PC-9 (cell line): ENCODE measurements at regions of chrX and their contacts with region 1.

Region 1: DNA sequence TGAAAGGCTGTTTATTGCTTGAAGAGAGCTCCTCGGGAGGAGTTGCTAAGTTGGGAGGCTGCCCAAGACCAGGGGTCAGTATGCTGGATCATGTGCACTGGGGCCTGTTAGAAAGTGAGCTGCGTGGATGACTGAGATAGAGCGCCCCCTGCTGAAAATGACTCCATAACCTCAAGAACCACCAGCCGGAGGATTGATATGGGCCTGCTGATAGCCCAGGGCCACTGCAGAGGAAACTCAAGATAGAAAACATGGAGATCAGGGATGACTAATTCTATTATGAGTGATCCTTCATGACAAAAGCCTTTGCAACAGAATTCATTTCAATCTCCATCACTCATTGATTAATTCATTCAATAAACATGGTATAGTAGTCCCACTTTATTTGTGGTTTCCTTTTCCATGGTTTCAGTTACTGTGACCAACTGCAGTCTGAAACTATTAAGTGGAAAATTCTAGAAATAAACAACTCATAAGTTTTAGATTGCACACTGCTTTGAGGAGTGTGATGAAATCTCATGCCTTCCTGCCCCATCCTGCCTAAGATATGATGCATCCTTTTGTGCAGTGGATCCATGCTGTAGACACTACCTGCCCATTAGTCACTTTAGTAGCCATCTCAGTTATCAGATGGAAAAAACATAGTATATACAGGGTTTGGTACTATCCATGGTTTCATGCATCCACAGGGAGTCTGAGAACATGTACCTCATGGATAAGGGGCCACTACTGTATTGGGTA is 126.7 kb upstream of the MBNL3 start:
- DNase-seq: peak in 1 of 2 experiments; percentile 24
- H3K4me3 ChIP-seq: no peak overlapping the region
- H3K27ac ChIP-seq: no peak overlapping the region
- H3K4me1 ChIP-seq: no peaks in the 10 kb centered on the region
- H3K27me3 ChIP-seq: no peaks in the 10 kb centered on the region
- CTCF ChIP-seq: peak; percentile 64

Region 2: DNA sequence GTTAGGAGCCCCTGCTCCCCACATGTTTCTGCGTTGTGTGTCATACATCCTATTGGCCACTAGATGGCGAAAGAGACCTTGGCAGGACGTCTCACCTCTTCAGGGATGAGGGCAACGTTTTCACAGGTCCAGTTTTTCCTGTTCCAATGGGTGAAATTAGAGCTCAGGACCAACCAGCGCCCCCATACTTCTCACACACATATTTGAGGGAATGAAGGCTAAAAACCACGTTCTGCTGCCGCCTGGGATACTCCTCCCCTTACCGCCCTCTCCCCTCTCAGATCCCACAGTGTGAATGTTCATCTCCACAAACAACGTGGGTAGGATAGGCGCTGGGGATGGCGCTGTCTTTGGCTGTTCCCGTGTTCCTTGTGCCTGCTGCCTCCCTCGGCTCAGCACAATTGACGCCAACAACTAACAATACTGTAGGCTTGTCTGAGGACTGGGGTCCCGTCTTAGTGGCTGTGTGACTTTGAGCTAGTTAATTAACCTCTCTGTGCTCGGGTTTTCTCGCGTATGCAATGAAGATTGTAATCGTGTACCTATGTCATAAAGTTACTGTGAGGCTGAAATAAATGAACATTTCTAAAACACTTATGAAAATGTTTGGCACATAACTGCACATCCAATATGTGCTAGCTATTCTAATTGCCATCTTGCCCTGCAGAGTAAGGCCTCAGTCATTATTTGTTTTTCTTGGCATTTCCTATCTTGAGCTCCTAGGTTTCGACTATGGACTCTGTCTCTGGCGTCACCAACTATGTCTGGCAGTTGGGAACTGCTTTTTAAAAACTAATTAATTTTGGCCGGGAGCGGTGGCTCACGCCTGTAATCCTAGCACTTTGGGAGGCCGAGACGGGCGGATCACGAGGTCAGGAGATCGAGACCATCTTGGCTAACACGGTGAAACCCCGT is 773.8 kb before region 1 on chrX:
- CTCF ChIA-PET with region 1: interaction called, 4 read pairs
- POLR2A ChIA-PET with region 1: no interaction called
- intact Hi-C with region 1: loop called (anchors 2 kb)
- DNase-seq: peak; percentile 45 to 78
- H3K4me3 ChIP-seq: peak overlapping the region; percentile 25; the same call in 1 of the 2 replicates
- H3K27ac ChIP-seq: no peak overlapping the region
- H3K4me1 ChIP-seq: peaks cover 11% of the 10 kb centered on the region
- H3K27me3 ChIP-seq: no peaks in the 10 kb centered on the region
- CTCF ChIP-seq: peak; percentile 96

Region 3: GRCh38 chrX:132092439-132093065 is 523.0 kb before region 1 on chrX:
- CTCF ChIA-PET with region 1: interaction called, 4 read pairs
- POLR2A ChIA-PET with region 1: no interaction called
- intact Hi-C with region 1: loop called (anchors 5 kb)
- DNase-seq: peak; percentile 58 to 61
- H3K4me3 ChIP-seq: no peak overlapping the region
- H3K27ac ChIP-seq: no peak overlapping the region
- H3K4me1 ChIP-seq: no peaks in the 10 kb centered on the region
- H3K27me3 ChIP-seq: no peaks in the 10 kb centered on the region
- CTCF ChIP-seq: peak; percentile 91

Region 4: DNA sequence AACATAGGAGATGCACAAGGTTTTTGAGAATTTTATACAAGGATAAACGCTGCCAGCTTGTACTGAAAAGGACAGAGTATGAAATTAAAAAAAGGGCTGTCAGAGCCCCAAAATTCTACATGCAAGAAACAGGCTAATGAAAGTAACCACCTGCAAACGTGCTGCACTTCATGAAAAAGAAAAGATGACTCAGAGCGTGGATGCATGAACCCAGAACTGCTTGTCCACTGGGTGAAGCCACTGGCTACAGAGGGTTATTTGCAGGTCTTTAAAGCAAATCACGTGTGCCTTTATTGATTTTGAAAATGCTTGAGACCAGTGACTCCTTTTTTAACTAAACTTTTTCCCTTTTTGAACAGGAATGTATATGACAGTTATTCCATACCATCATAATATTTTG is 462.4 kb before region 1 on chrX:
- CTCF ChIA-PET with region 1: no interaction called
- POLR2A ChIA-PET with region 1: no interaction called
- intact Hi-C with region 1: no loop called
- DNase-seq: no peak
- H3K4me3 ChIP-seq: no peak overlapping the region
- H3K27ac ChIP-seq: no peak overlapping the region
- H3K4me1 ChIP-seq: no peaks in the 10 kb centered on the region
- H3K27me3 ChIP-seq: no peaks in the 10 kb centered on the region
- CTCF ChIP-seq: no peak

Region 5: DNA sequence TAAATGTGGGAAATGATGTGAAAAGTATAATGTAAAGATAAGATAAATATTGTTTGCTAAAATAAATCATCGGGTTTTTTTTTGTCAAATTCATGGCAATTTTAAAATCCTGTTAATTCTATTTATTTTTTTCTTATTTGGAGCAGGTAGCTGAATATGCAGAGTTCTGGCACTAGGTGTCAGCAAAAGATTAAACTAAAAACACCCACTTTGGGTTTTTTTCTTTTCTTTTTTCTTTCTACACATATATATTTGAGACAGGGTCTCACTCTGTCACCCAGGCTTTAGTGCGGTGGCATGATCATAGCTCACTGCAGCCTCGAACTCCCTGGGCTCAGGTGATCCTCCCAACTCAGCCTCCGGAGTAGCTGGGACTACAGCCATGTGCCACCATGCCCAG is 389.4 kb before region 1 on chrX:
- CTCF ChIA-PET with region 1: interaction called, 15 read pairs
- POLR2A ChIA-PET with region 1: no interaction called
- intact Hi-C with region 1: loop called (anchors 1 kb)
- DNase-seq: no peak
- H3K4me3 ChIP-seq: no peak overlapping the region
- H3K27ac ChIP-seq: no peak overlapping the region
- H3K4me1 ChIP-seq: peaks cover 22% of the 10 kb centered on the region
- H3K27me3 ChIP-seq: no peaks in the 10 kb centered on the region
- CTCF ChIP-seq: peak; percentile 80

Region 6: GRCh38 chrX:132292793-132293192 is 322.8 kb before region 1 on chrX:
- CTCF ChIA-PET with region 1: interaction called, 6 read pairs
- POLR2A ChIA-PET with region 1: no interaction called
- intact Hi-C with region 1: loop called (anchors 1 kb)
- DNase-seq: peak; percentile 21 to 45
- H3K4me3 ChIP-seq: no peak overlapping the region
- H3K27ac ChIP-seq: no peak overlapping the region
- H3K4me1 ChIP-seq: no peaks in the 10 kb centered on the region
- H3K27me3 ChIP-seq: no peaks in the 10 kb centered on the region
- CTCF ChIP-seq: peak; percentile 83

Region 7: GRCh38 chrX:132488819-132489577 is 126.6 kb before region 1 on chrX and contains the start of gene MBNL3:
- CTCF ChIA-PET with region 1: no interaction called
- POLR2A ChIA-PET with region 1: no interaction called
- intact Hi-C with region 1: loop called (anchors 5 kb)
- DNase-seq: peak; percentile 72 to 86
- H3K4me3 ChIP-seq: peak within 1 kb of the TSS; percentile 93
- H3K27ac ChIP-seq: peak within 1 kb of the TSS; percentile 75
- H3K4me1 ChIP-seq: peaks cover 27% of the 10 kb centered on the region
- H3K27me3 ChIP-seq: no peaks in the 10 kb centered on the region
- CTCF ChIP-seq: no peak
- total RNA-seq, gene MBNL3: 24.4 and 36.1 TPM in 2 replicates

Region 8: DNA sequence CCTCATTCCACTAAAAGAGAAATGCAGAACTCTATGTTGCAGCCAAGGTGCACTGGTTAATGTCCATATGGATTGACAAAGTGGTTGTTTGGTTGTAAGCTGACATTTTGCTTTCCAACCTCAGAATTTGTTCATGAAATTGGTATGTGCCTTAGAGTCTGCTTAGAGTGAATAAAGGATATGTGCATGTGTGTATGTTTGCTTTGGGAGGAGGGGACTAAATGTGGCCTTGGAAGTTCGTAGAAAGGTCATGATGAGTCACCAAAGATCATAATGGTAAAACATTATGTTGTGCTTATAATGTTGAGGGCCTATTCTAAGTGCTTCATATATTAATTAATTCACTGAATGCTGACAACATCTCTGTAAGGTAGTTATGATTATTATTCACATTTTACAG is 82.6 kb before region 1 on chrX:
- CTCF ChIA-PET with region 1: no interaction called
- POLR2A ChIA-PET with region 1: no interaction called
- intact Hi-C with region 1: no loop called
- DNase-seq: peak in 1 of 2 experiments; percentile 40
- H3K4me3 ChIP-seq: no peak overlapping the region
- H3K27ac ChIP-seq: no peak overlapping the region
- H3K4me1 ChIP-seq: peaks cover 12% of the 10 kb centered on the region
- H3K27me3 ChIP-seq: no peaks in the 10 kb centered on the region
- CTCF ChIP-seq: no peak

Region 9: GRCh38 chrX:132651421-132652086 is 36.0 kb after region 1 on chrX:
- CTCF ChIA-PET with region 1: no interaction called
- POLR2A ChIA-PET with region 1: no interaction called
- intact Hi-C with region 1: no loop called
- DNase-seq: peak in 1 of 2 experiments; percentile 21
- H3K4me3 ChIP-seq: no peak overlapping the region
- H3K27ac ChIP-seq: no peak overlapping the region
- H3K4me1 ChIP-seq: no peaks in the 10 kb centered on the region
- H3K27me3 ChIP-seq: no peaks in the 10 kb centered on the region
- CTCF ChIP-seq: peak; percentile 37; the same call in 1 of the 2 replicates